Left lung (tissue), 14 donors: ENCODE measurements at regions of chr6 and their contacts with region 1.

Region 1: GRCh38 chr6:135506270-135506997 is 8.9 kb upstream of the AHI1 start:
- DNase-seq: peak in 1 of 4 donors; percentile 53
- ATAC-seq: peak; percentile 90
- H3K4me3 ChIP-seq: no peak overlapping the region
- H3K27ac ChIP-seq: no peak overlapping the region
- H3K4me1 ChIP-seq: no peaks in the 10 kb centered on the region
- H3K27me3 ChIP-seq: no peaks in the 10 kb centered on the region
- CTCF ChIP-seq: peak in 1 of 2 donors; percentile 34

Region 2: GRCh38 chr6:136317021-136317694 is 810.7 kb after region 1 on chr6:
- intact Hi-C with region 1: loop called in 1 of 2 experiments (anchors 10 kb)
- DNase-seq: peak in 2 of 4 donors; percentile 44 to 73
- ATAC-seq: peak; percentile 96
- H3K4me3 ChIP-seq: no peak overlapping the region
- H3K27ac ChIP-seq: no peak overlapping the region
- H3K4me1 ChIP-seq: no peaks in the 10 kb centered on the region
- H3K27me3 ChIP-seq: no peaks in the 10 kb centered on the region
- CTCF ChIP-seq: peak; percentile 61 to 83